ENCODE measurements at regions of chrX and their contacts with region 1.

Region 1: GRCh38 chrX:120213436-120214265 is 37.0 kb upstream of the ZBTB33 start:
- DNase-seq: peak; percentile 86

Region 2: GRCh38 chrX:119981286-119982070 is 232.2 kb before region 1 on chrX:
- in situ Hi-C with region 1: loop called (anchors 25 kb)
- DNase-seq: peak; percentile 79

Region 3: GRCh38 chrX:120120223-120120622 is 93.4 kb before region 1 on chrX:
- in situ Hi-C with region 1: loop called (anchors 25 kb)
- DNase-seq: no peak

Measured in KBM-7 (cell line).